ENCODE measurements at regions of chr9 and their contacts with region 1.

Region 1: GRCh38 chr9:111896353-111896958 is at the start of gene UGCG:
- DNase-seq: peak; percentile 90
- H3K4me3 Mint-ChIP-seq: no peak within 1 kb of the TSS
- H3K27ac Mint-ChIP-seq: peak within 1 kb of the TSS; percentile 96
- H3K4me1 Mint-ChIP-seq: no peaks in the 10 kb centered on the region
- H3K27me3 Mint-ChIP-seq: no peaks in the 10 kb centered on the region
- CTCF ChIP-seq: no peak
- total RNA-seq, gene UGCG: 75.5 and 84.8 TPM in 2 replicates

Region 2: GRCh38 chr9:111815277-111816070 is 81.0 kb before region 1 on chr9:
- CTCF ChIA-PET with region 1: interaction called, 4 read pairs
- intact Hi-C with region 1: loop called (anchors 5 kb)
- DNase-seq: peak; percentile 36
- H3K4me3 Mint-ChIP-seq: peak overlapping the region; percentile 50
- H3K27ac Mint-ChIP-seq: peak overlapping the region; percentile 90
- H3K4me1 Mint-ChIP-seq: peaks cover 28% of the 10 kb centered on the region
- H3K27me3 Mint-ChIP-seq: no peaks in the 10 kb centered on the region
- CTCF ChIP-seq: no peak

Region 3: GRCh38 chr9:111974092-111974681 is 77.7 kb after region 1 on chr9:
- CTCF ChIA-PET with region 1: interaction called, 12 read pairs
- intact Hi-C with region 1: no loop called
- DNase-seq: peak; percentile 14
- H3K4me3 Mint-ChIP-seq: no peak overlapping the region
- H3K27ac Mint-ChIP-seq: no peak overlapping the region
- H3K4me1 Mint-ChIP-seq: peaks cover 26% of the 10 kb centered on the region
- H3K27me3 Mint-ChIP-seq: no peaks in the 10 kb centered on the region
- CTCF ChIP-seq: no peak